ENCODE measurements at regions of chr10 and their contacts with region 1.

Region 1: DNA sequence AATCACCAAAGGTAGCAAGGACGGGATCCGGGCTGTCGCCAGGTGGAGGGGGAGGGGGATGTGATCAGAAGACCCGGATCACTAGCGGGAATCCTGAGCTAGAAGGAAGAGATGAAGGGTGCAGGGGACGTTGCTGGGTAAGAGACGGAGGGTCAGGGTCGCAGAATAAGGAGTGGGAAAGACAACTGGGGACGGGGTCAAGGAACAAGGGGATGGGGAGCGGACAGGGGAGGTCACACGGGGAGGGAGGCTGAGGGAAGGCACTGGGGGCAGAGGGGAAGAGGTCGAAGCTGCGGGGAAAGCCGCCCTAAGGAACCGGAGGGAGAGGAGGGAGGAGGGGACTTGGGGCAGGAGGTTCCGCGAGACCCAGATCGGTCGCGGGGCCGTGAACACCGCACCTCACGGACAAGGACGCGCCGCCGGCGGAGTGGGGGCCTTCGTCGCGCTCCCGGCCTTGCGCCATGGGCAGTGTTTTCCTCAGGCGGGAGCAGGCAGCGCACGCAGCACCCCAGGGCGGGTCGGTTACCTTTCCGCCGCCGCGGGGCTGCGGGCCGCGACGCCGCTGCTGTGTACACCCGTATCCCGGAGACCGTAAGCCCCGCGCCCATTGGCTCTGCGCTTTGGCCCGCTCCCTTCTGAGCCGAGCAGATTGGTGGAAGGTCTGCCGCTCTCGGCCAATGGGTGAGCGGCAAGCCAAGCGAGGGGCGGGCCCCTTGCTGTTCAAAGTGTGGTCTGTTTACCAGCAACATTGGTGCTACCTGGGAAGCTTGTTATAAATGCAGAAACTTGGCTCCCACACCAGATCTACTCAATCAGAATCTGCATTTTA is at the start of gene CFAP43:
- DNase-seq: peak; percentile 91
- ATAC-seq: peak; percentile 100
- H3K4me3 ChIP-seq: peak within 1 kb of the TSS; percentile 96
- H3K27ac ChIP-seq: no peak within 1 kb of the TSS; the same call in 1 of the 2 replicates
- H3K4me1 ChIP-seq: no peaks in the 10 kb centered on the region
- H3K27me3 ChIP-seq: no peaks in the 10 kb centered on the region
- CTCF ChIP-seq: no peak
- POLR2A ChIP-seq: no peak
- RAD21 ChIP-seq: no peak
- total RNA-seq, gene CFAP43: under 0.01 TPM in 1 of 2 replicates, not detected in the other

Region 2: GRCh38 chr10:104076743-104077160 is 155.2 kb before region 1 on chr10:
- CTCF ChIA-PET with region 1: no interaction called
- POLR2A ChIA-PET with region 1: interaction called, 13 read pairs
- dilution Hi-C with region 1: no loop called
- in situ Hi-C with region 1: no loop called
- intact Hi-C with region 1: no loop called
- DNase-seq: peak; percentile 16
- ATAC-seq: no peak
- H3K4me3 ChIP-seq: no peak overlapping the region
- H3K27ac ChIP-seq: no peak overlapping the region
- H3K4me1 ChIP-seq: no peaks in the 10 kb centered on the region
- H3K27me3 ChIP-seq: peaks cover 61% of the 10 kb centered on the region
- CTCF ChIP-seq: no peak
- POLR2A ChIP-seq: no peak
- RAD21 ChIP-seq: no peak

Region 3: GRCh38 chr10:104127411-104127810 is 104.6 kb before region 1 on chr10:
- CTCF ChIA-PET with region 1: no interaction called
- POLR2A ChIA-PET with region 1: no interaction called
- dilution Hi-C with region 1: no loop called
- in situ Hi-C with region 1: no loop called
- intact Hi-C with region 1: no loop called
- DNase-seq: no peak
- ATAC-seq: peak; percentile 29; the same call in 1 of the 2 replicates
- H3K4me3 ChIP-seq: no peak overlapping the region
- H3K27ac ChIP-seq: no peak overlapping the region
- H3K4me1 ChIP-seq: no peaks in the 10 kb centered on the region
- H3K27me3 ChIP-seq: no peaks in the 10 kb centered on the region
- CTCF ChIP-seq: no peak
- POLR2A ChIP-seq: no peak
- RAD21 ChIP-seq: no peak

Region 4: DNA sequence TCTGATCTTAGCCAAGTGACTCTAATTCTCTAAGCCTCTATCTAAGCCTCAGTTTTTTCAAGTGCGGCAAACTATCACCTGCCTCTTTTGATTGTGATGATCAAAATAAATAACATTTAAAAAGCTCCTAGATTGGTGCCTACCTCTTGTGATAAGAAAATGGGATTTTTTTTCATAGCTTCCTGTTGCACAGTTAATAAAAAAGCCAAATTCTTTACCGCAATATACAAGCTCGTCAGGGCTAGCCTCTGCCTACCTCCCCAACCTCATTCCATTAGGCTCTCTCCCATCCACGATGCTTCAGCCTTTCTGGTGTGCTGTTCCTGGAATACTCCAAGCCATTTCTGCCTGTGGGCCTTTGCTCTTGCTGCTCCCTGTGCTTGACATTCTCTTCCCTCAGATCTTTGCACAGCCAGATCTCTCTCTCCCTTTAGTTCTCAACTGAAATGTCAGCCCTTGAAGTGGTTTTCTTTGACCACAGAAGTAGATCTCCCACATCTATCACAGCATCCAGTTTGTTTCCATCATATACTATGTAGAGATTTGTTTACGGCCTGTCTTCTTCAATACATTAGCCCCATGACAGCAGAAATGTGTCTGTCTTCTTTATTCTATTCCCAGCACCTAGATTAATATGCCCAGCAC is 61.3 kb before region 1 on chr10:
- CTCF ChIA-PET with region 1: no interaction called
- POLR2A ChIA-PET with region 1: no interaction called
- dilution Hi-C with region 1: no loop called
- in situ Hi-C with region 1: no loop called
- intact Hi-C with region 1: loop called (anchors 2 kb)
- DNase-seq: no peak
- ATAC-seq: no peak
- H3K4me3 ChIP-seq: no peak overlapping the region
- H3K27ac ChIP-seq: no peak overlapping the region
- H3K4me1 ChIP-seq: no peaks in the 10 kb centered on the region
- H3K27me3 ChIP-seq: peaks cover 24% of the 10 kb centered on the region
- CTCF ChIP-seq: no peak
- POLR2A ChIP-seq: no peak
- RAD21 ChIP-seq: no peak

Measured in IMR-90 (cell line).